GM12878 (cell line): ENCODE measurements at regions of chr3 and their contacts with region 1.

Region 1: DNA sequence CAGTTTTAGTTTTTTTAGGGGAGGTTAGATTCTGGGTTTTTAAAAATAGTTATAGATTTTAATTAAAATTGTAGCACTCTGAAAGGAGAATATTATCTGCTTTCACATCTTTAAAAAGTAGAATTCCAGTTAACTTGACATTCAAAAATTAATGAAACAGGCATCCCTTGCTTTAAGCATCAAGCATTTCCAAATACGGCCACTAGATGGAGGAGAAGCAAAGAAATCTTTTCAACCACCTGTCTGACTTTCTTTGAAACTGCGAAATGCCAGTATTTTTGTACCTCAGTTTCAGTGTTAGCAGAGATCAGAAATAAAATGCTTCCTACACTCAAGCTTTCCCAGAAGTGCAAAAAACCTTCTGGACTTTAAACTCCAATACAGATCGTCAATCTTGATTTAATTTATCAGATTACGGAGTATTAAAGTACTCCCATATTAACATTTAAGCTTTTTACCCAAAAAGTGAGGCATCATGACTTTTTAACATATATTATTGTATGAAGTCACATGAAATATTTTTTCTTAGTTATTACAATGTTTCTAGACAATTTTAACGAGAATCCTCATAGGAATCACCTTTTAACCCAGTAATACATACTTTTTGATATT is 153.3 kb downstream of the P3H2 start:
- DNase-seq: no peak
- ATAC-seq: peak; percentile 89
- H3K4me3 ChIP-seq: no peak overlapping the region
- H3K27ac ChIP-seq: no peak overlapping the region
- H3K4me1 ChIP-seq: no peaks in the 10 kb centered on the region
- H3K27me3 ChIP-seq: no peaks in the 10 kb centered on the region
- CTCF ChIP-seq: peak; percentile 75 to 81 (median 81)
- EP300 ChIP-seq: no peak
- POLR2A ChIP-seq: no peak
- RAD21 ChIP-seq: peak; percentile 93

Region 2: GRCh38 chr3:190076601-190077396 is 109.4 kb after region 1 on chr3:
- CTCF ChIA-PET with region 1: interaction called, 10 read pairs
- POLR2A ChIA-PET with region 1: no interaction called
- RAD21 ChIA-PET with region 1: interaction called, 3 read pairs
- SMC1A ChIA-PET with region 1: interaction called, 12 read pairs
- in situ Hi-C with region 1: no loop called
- intact Hi-C with region 1: no loop called
- DNase-seq: no peak
- ATAC-seq: peak; percentile 31; the same call in 1 of the 3 replicates
- H3K4me3 ChIP-seq: no peak overlapping the region
- H3K27ac ChIP-seq: no peak overlapping the region
- H3K4me1 ChIP-seq: no peaks in the 10 kb centered on the region
- H3K27me3 ChIP-seq: no peaks in the 10 kb centered on the region
- CTCF ChIP-seq: no peak
- EP300 ChIP-seq: no peak
- POLR2A ChIP-seq: no peak
- RAD21 ChIP-seq: no peak

Region 3: GRCh38 chr3:190120269-190121060 is 153.1 kb after region 1 on chr3 and contains the start of gene P3H2:
- CTCF ChIA-PET with region 1: interaction called, 6 read pairs
- POLR2A ChIA-PET with region 1: no interaction called
- RAD21 ChIA-PET with region 1: interaction called, 4 read pairs
- SMC1A ChIA-PET with region 1: interaction called, 14 read pairs
- in situ Hi-C with region 1: no loop called
- intact Hi-C with region 1: no loop called
- DNase-seq: no peak
- ATAC-seq: peak; percentile 82
- H3K4me3 ChIP-seq: peak within 1 kb of the TSS; percentile 63
- H3K27ac ChIP-seq: peak within 1 kb of the TSS; percentile 39
- H3K4me1 ChIP-seq: peaks cover 4% of the 10 kb centered on the region; the same call in 1 of the 2 replicates
- H3K27me3 ChIP-seq: peaks cover 2 to 3% of the 10 kb centered on the region in 2 experiments; a peak in 3 of 4 replicates
- CTCF ChIP-seq: peak; percentile 25 to 36 (median 30); a peak in 4 of 6 replicates
- EP300 ChIP-seq: no peak
- POLR2A ChIP-seq: peak; percentile 70
- RAD21 ChIP-seq: peak; percentile 50
- polyA plus RNA-seq, gene P3H2: 27.0 to 36.7 TPM

Region 4: DNA sequence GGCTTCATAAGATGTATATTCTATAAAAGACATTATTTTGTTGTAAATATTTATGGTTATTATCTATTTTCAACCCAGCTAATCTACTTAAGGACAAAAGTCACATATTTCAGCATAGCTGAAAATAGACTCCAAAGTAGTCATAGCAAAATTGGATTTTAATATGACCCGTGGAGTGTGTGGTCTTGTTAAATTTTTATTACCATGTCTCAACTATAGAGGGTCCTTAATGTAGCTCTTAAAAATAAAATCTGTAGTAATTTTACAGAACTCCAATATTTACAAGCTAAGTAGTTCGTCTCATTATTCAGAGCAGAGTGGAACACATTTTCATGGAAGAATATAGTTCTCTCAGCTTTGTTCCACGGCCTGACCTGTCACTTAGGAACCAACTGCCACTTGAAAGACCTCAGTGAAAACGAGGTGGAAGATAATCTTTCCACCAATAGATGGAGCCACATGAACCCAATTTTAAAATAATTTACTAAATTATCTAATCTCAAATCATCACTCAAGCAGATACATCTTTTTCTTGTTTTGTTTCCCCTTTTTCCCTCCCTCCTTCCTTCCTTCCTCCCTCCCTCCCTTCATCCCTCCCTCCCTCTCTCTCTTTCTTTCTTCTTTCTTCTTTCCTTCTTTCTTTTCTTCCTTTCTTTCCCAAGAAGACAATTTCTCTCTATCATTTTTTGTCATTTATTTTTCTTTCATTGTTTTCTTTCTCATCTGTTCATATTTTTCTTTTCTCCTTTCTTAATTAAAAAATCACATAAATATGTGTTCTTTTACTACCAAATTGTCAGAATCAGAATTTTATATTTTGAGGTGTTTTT is 257.7 kb after region 1 on chr3:
- CTCF ChIA-PET with region 1: interaction called, 69 read pairs
- POLR2A ChIA-PET with region 1: no interaction called
- RAD21 ChIA-PET with region 1: interaction called, 11 read pairs
- SMC1A ChIA-PET with region 1: interaction called, 7 read pairs
- in situ Hi-C with region 1: no loop called
- intact Hi-C with region 1: no loop called
- DNase-seq: no peak
- ATAC-seq: peak; percentile 45
- H3K4me3 ChIP-seq: no peak overlapping the region
- H3K27ac ChIP-seq: no peak overlapping the region
- H3K4me1 ChIP-seq: no peaks in the 10 kb centered on the region
- H3K27me3 ChIP-seq: no peaks in the 10 kb centered on the region
- CTCF ChIP-seq: peak; percentile 13 to 38 (median 16); a peak in 3 of 6 replicates
- EP300 ChIP-seq: no peak
- POLR2A ChIP-seq: no peak
- RAD21 ChIP-seq: peak; percentile 60

Region 5: DNA sequence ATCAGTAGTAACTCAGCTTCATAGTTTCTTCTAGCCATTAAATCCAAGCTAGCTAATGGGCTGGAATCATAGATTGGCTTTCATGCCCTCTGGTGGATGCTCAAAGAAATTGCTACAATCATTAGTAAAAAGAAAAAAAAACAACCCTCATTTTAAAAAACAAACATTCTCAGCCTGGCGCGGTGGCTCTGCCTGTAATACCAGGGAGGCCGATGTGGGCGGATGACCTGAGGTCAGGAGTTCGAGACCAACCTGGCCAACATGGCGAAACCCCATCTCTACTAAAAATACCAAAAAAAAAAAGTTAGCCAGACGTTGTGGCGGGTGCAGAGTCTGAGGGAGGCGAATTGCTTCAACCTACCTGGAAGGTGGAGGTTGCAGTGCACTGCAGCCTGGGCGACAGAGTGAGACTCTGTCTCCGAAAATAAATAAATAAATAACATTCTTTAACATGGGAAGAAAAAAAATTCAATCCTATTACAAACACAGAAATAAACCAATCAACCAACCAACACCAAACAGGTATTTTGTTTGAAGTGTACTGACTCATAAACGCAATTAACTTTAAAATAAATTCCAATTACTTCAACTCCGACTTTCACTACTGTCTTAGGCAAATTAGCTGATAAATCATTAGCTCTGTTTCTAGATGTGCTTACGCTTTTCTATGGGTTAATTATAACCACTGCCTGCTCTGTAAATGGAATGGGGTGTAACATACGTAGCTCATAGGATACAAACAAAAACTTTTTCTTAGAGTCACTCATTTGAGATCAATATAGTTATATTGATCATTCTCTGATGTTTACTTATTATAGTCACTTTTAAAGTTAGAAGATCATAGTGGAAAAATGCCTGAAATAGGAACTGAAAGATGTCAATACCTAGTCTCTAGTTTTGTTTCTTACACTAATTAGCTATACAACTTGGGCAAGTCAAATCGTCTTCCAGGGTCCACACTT is 457.4 kb after region 1 on chr3:
- CTCF ChIA-PET with region 1: interaction called, 78 read pairs
- POLR2A ChIA-PET with region 1: no interaction called
- RAD21 ChIA-PET with region 1: interaction called, 34 read pairs
- SMC1A ChIA-PET with region 1: interaction called, 57 read pairs
- in situ Hi-C with region 1: loop called (anchors 5 kb)
- intact Hi-C with region 1: loop called (anchors 1 kb)
- DNase-seq: peak; percentile 20
- ATAC-seq: peak; percentile 90
- H3K4me3 ChIP-seq: no peak overlapping the region
- H3K27ac ChIP-seq: no peak overlapping the region
- H3K4me1 ChIP-seq: peaks cover 6% of the 10 kb centered on the region
- H3K27me3 ChIP-seq: no peaks in the 10 kb centered on the region
- CTCF ChIP-seq: peak; percentile 48 to 59 (median 53); a peak in 5 of 6 replicates
- EP300 ChIP-seq: no peak
- POLR2A ChIP-seq: no peak
- RAD21 ChIP-seq: peak; percentile 69